Dorsolateral prefrontal cortex (tissue), 120 donors: ENCODE measurements at regions of chr11 and their contacts with region 1.

Region 1: GRCh38 chr11:114762408-114762807 is 84.1 kb downstream of the NXPE2 start:
- DNase-seq: peak; percentile 38 to 69 (median 61)
- H3K4me3 ChIP-seq: no peak overlapping the region
- H3K27ac ChIP-seq: no peak overlapping the region
- H3K27me3 ChIP-seq: peaks cover 0 to 16% (median 0%) of the 10 kb centered on the region in 45 donors
- CTCF ChIP-seq: peak; percentile 37 to 83 (median 68)

Region 2: GRCh38 chr11:114280696-114281095 is 481.7 kb before region 1 on chr11:
- intact Hi-C with region 1: loop called in 1 of 2 experiments (anchors 5 kb)
- DNase-seq: peak in 2 of 10 donors; percentile 12 to 24
- H3K4me3 ChIP-seq: no peak overlapping the region
- H3K27ac ChIP-seq: no peak overlapping the region
- H3K27me3 ChIP-seq: peaks cover 0 to 12% (median 0%) of the 10 kb centered on the region in 45 donors
- CTCF ChIP-seq: peak in 52 of 56 donors; percentile 12 to 58 (median 42)

Region 3: DNA sequence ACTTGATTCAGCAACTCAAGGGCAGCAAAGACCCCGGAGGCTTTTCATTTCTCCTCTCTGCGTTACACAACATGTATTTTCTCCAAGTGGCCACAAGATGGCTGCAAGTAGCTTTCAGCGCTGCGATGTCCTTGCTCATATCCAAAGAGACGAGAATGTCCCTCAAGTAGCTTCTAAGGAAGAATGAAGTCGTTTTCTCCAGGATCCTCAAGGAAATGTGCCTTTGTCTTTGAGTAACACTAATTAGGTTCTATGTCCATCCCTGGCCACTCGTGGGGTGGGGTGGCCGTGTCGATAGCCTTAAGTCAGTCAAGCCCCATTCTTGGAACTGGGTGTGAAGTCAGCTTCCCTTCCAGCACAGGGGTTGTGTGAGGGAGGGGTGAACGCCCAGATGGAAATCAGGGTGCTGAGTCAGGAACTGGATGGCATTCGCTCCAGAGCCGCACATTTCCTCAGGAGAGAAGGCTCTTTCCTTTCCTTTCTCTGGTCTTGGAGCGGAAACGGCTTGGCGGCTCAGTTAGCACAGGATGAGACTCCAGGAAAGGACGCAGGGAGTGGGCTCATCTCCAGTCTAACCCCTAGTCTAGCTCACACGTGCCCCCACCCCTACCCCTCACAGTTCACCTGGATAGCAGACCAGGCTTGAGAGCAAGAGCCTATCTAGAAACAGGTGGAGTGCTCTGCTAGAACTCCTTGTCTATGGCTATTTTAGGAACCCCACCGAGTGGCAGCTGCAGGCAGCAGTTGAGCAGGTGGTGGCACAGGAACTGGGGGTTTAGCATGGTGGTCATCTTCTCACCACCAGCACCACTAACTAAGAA is 421.9 kb before region 1 on chr11:
- intact Hi-C with region 1: loop called (anchors 5 to 10 kb)
- DNase-seq: peak in 8 of 10 donors; percentile 25 to 65 (median 48)
- H3K4me3 ChIP-seq: peak overlapping the region in 37 of 59 donors; percentile 0 to 57 (median 34)
- H3K27ac ChIP-seq: peak overlapping the region in 5 of 59 donors; percentile 24 to 65 (median 55)
- H3K27me3 ChIP-seq: no peaks in the 10 kb centered on the region
- CTCF ChIP-seq: peak; percentile 68 to 95 (median 81)